Mucosa of descending colon (tissue), 3 donors: ENCODE measurements at regions of chr4 and their contacts with region 1.

Region 1: GRCh38 chr4:76305971-76306881 is at the start of gene STBD1:
- DNase-seq: peak; percentile 89 to 94 (median 92)
- ATAC-seq: peak; percentile 86
- H3K4me3 ChIP-seq: peak within 1 kb of the TSS; percentile 69
- H3K4me1 ChIP-seq: peaks cover 45% of the 10 kb centered on the region
- CTCF ChIP-seq: no peak
- total RNA-seq, gene STBD1: 11.9 to 34.3 (median 19.7) TPM

Region 2: GRCh38 chr4:76198411-76199237 is 107.6 kb before region 1 on chr4:
- intact Hi-C with region 1: loop called in 1 of 2 experiments (anchors 10 kb)
- DNase-seq: peak; percentile 60 to 91 (median 69)
- ATAC-seq: peak; percentile 71
- H3K4me3 ChIP-seq: no peak overlapping the region
- H3K4me1 ChIP-seq: peaks cover 49% of the 10 kb centered on the region
- CTCF ChIP-seq: no peak

Region 3: DNA sequence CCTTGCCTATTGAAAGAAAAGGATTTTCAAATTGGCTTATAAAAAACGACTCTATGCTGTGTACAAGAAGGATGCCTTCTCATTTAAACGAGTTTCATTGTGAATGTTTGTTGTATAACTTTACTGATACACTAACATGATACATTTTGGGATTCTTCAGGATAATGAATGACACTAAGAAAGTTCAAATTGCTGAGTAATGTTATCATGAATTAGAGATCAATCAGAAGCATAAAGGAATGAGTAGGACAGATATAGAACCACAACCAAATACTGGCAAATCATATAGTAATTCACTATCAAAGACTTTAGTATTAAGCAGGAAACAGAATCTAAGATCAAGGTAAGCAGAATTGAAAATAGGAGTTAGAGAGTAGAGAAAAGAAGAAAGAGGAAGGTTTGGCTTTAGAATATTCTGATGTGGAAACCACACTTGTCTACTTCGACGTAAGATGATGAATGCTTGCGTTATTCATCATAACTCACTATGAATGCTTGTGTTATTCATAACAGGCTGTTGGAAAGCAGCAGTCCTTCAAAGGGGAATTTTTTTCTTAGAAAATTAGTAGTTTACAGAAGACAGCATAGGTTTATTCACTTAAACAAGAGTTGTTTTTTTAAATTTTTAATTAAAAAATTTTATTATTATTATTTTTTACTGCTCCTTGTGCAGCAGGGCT is 101.4 kb after region 1 on chr4:
- intact Hi-C with region 1: no loop called
- DNase-seq: no peak
- ATAC-seq: no peak
- H3K4me3 ChIP-seq: no peak overlapping the region
- H3K4me1 ChIP-seq: no peaks in the 10 kb centered on the region
- CTCF ChIP-seq: no peak

Region 4: DNA sequence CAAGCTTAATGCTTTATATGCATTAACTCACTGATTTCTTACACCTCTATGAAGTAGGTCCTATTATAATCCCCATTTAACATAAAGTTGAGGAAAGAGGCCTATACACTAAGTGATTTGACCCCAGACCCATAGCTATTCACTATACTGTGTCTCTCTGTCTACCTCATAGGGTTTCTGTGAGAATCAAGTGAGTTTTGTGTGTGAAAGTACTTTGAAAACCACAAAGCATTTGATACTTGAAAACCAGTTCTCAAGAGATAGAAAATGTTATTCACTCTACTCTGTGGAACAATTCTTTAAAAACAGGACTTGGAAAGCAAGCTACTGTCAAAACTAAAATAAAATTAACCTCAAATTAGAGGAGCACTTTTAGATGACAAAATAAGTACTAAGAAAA is 163.8 kb after region 1 on chr4:
- intact Hi-C with region 1: no loop called
- DNase-seq: no peak
- ATAC-seq: no peak
- H3K4me3 ChIP-seq: no peak overlapping the region
- H3K4me1 ChIP-seq: no peaks in the 10 kb centered on the region
- CTCF ChIP-seq: no peak